ENCODE measurements at regions of chrX and their contacts with region 1.

Region 1: GRCh38 chrX:119852382-119853353 is at the start of gene UPF3B:
- DNase-seq: peak; percentile 96
- ATAC-seq: peak; percentile 98
- H3K4me3 Mint-ChIP-seq: peak within 1 kb of the TSS; percentile 88
- H3K27ac Mint-ChIP-seq: peak within 1 kb of the TSS; percentile 88
- H3K4me1 Mint-ChIP-seq: peaks cover 13% of the 10 kb centered on the region
- H3K27me3 Mint-ChIP-seq: peaks cover under 1% of the 10 kb centered on the region
- total RNA-seq, gene UPF3B: 10.3 to 10.9 TPM

Region 2: GRCh38 chrX:119871599-119872395 is 19.1 kb after region 1 on chrX and contains the starts of genes NDUFA1 and RNF113A:
- CTCF ChIA-PET with region 1: interaction called, 8 read pairs
- POLR2A ChIA-PET with region 1: interaction called, 18 read pairs
- DNase-seq: peak; percentile 89
- ATAC-seq: peak; percentile 93
- H3K4me3 Mint-ChIP-seq: peak within 1 kb of the TSS; percentile 98
- H3K27ac Mint-ChIP-seq: peak within 1 kb of the TSS; percentile 100
- H3K4me1 Mint-ChIP-seq: peaks cover 12% of the 10 kb centered on the region
- H3K27me3 Mint-ChIP-seq: no peaks in the 10 kb centered on the region
- total RNA-seq, gene NDUFA1: 110 to 111 TPM
- total RNA-seq, gene RNF113A: 29.1 to 29.5 TPM

Region 3: GRCh38 chrX:119899125-119899524 is 46.5 kb after region 1 on chrX:
- CTCF ChIA-PET with region 1: no interaction called
- POLR2A ChIA-PET with region 1: no interaction called
- DNase-seq: no peak
- ATAC-seq: no peak
- H3K4me3 Mint-ChIP-seq: no peak overlapping the region
- H3K27ac Mint-ChIP-seq: no peak overlapping the region
- H3K4me1 Mint-ChIP-seq: no peaks in the 10 kb centered on the region
- H3K27me3 Mint-ChIP-seq: no peaks in the 10 kb centered on the region